ENCODE measurements at regions of chr3 and their contacts with region 1.

Region 1: DNA sequence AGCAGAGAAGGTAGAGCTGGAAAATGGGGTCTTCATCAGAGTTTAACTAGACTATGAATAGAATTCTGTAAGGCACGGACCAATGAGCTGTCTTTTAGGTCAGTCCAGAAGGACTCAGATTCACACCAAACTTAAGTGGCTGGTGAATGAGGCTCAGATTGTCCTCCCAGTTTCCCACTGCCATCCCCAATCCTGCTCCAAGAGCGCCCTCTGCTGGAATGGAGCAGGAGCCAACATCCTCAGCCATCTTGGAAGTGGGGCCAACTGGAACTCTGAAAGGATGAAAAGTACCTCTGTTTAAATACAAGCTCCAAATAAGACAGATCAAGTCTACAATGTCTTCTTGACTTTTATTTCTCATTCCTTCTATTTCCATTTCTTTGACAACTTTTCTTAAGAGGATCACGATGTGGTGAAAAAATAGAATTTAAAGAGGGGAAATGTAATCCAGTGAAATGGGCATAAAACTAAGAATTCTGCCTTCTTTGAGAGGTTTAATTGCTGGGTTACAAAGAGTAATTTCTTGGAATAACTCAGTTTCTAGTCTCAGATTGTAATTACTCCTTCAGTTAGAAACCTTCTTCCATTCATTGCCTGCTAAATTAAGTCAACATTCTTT is 217.1 kb upstream of the TPRG1 start:
- DNase-seq: peak; percentile 78 to 89 (median 86)
- ATAC-seq: peak; percentile 82
- H3K4me3 ChIP-seq: no peak overlapping the region
- H3K27ac ChIP-seq: no peak overlapping the region
- H3K4me1 ChIP-seq: peaks cover 11 to 55% of the 10 kb centered on the region in 2 donors
- H3K27me3 ChIP-seq: no peaks in the 10 kb centered on the region
- CTCF ChIP-seq: peak; percentile 91 to 92

Region 2: GRCh38 chr3:187739561-187740332 is 1215.0 kb before region 1 on chr3:
- intact Hi-C with region 1: loop called (anchors 5 to 10 kb)
- DNase-seq: peak; percentile 86 to 95 (median 91)
- ATAC-seq: peak; percentile 44
- H3K4me3 ChIP-seq: peak overlapping the region; percentile 9 to 57
- H3K27ac ChIP-seq: peak overlapping the region; percentile 99
- H3K4me1 ChIP-seq: peaks cover 27 to 63% of the 10 kb centered on the region in 2 donors
- H3K27me3 ChIP-seq: no peaks in the 10 kb centered on the region
- CTCF ChIP-seq: peak; percentile 96 to 97

Region 3: DNA sequence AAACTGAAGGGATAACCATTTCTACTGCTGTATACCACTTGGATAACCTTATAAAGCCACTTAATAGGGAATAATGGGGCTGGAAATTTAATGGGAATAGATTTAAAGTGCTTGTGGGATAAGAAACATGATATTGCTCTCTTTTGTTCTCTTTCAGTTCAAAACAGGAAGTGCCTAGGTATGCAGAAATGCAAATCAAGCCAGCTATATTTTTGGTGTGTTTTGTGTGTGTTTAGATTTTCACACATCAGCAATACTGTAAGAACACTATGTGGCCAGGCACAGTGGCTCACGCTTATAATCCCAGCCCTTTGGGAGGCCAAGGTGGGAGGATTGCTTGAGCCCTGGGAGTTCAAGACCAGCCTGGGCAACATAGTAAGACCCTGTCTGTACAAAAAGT is 225.3 kb before region 1 on chr3:
- intact Hi-C with region 1: no loop called
- DNase-seq: no peak
- ATAC-seq: no peak
- H3K4me3 ChIP-seq: no peak overlapping the region
- H3K27ac ChIP-seq: no peak overlapping the region
- H3K4me1 ChIP-seq: peaks cover 0 to 7% of the 10 kb centered on the region in 2 donors
- H3K27me3 ChIP-seq: no peaks in the 10 kb centered on the region
- CTCF ChIP-seq: no peak

Region 4: DNA sequence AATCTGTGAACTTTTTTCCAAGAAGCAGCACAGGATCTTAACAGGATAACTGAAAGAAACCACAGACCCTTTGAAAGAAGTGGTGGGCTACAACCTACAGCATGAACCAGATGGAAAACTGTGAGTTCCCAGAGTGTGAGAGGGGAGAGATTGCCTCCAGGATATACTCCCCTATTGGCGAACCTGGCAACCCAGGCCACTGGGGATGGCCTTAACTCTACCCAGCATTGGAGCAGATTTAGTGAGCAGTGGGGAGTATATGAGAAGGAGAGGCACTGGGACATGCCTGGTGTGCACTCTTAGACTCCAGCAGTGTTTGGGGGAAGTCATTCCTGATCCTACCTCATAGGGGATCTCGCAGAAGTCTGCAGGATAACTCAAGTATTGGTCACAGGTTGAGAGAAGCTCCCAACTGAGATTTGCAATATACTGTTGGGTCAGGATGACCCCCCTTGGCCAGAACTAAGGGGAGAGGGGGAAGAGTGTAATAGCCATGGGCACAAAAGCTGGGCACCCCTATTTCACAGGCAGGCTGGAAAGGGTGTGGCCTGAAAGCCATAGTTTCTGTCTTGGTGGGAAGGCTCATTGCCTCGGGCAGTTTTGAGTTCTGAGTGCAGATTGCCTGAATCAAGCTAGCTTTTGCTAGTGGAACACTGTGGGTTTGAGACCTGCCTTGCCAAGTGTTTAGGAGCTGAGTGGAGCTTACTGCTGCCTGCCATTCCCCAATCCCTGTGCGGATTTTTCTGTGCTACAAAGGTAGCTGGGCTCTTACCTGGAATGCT is 475.7 kb after region 1 on chr3:
- intact Hi-C with region 1: no loop called
- DNase-seq: no peak
- ATAC-seq: no peak
- H3K4me3 ChIP-seq: no peak overlapping the region
- H3K27ac ChIP-seq: no peak overlapping the region
- H3K4me1 ChIP-seq: no peaks in the 10 kb centered on the region
- H3K27me3 ChIP-seq: no peaks in the 10 kb centered on the region
- CTCF ChIP-seq: no peak

Measured in left lung (tissue), 14 donors.